Activated CD8-positive, alpha-beta T cell treated with anti-CD3 and anti-CD28 coated beads for 36 hours (primary cell): ENCODE measurements at regions of chr9 and their contacts with region 1.

Region 1: GRCh38 chr9:136312436-136312835 is 8.5 kb upstream of the CCDC187 start:
- DNase-seq: peak; percentile 61
- ATAC-seq: peak; percentile 71
- H3K4me3 Mint-ChIP-seq: no peak overlapping the region
- H3K27ac Mint-ChIP-seq: no peak overlapping the region
- H3K4me1 Mint-ChIP-seq: peaks cover 5% of the 10 kb centered on the region
- H3K27me3 Mint-ChIP-seq: peaks cover 2% of the 10 kb centered on the region
- CTCF ChIP-seq: peak; percentile 62

Region 2: GRCh38 chr9:136363606-136364370 is 51.4 kb after region 1 on chr9 and contains the start of gene DNLZ:
- CTCF ChIA-PET with region 1: interaction called, 14 read pairs
- POLR2A ChIA-PET with region 1: no interaction called
- intact Hi-C with region 1: no loop called
- DNase-seq: peak; percentile 87
- ATAC-seq: peak; percentile 77
- H3K4me3 Mint-ChIP-seq: peak within 1 kb of the TSS; percentile 81
- H3K27ac Mint-ChIP-seq: peak within 1 kb of the TSS; percentile 89
- H3K4me1 Mint-ChIP-seq: peaks cover 11% of the 10 kb centered on the region
- H3K27me3 Mint-ChIP-seq: no peaks in the 10 kb centered on the region
- CTCF ChIP-seq: peak; percentile 98
- total RNA-seq, gene DNLZ: 16.1 to 17.4 TPM

Region 3: GRCh38 chr9:136377341-136378169 is 65.1 kb after region 1 on chr9:
- CTCF ChIA-PET with region 1: no interaction called
- POLR2A ChIA-PET with region 1: no interaction called
- intact Hi-C with region 1: no loop called
- DNase-seq: no peak
- ATAC-seq: no peak
- H3K4me3 Mint-ChIP-seq: no peak overlapping the region
- H3K27ac Mint-ChIP-seq: no peak overlapping the region
- H3K4me1 Mint-ChIP-seq: peaks cover 8% of the 10 kb centered on the region
- H3K27me3 Mint-ChIP-seq: no peaks in the 10 kb centered on the region
- CTCF ChIP-seq: no peak

Region 4: GRCh38 chr9:136400038-136400834 is 87.8 kb after region 1 on chr9 and contains the start of gene SNAPC4:
- CTCF ChIA-PET with region 1: interaction called, 5 read pairs
- POLR2A ChIA-PET with region 1: interaction called, 4 read pairs
- intact Hi-C with region 1: loop called (anchors 10 kb)
- DNase-seq: peak; percentile 87
- ATAC-seq: peak; percentile 64
- H3K4me3 Mint-ChIP-seq: peak within 1 kb of the TSS; percentile 87
- H3K27ac Mint-ChIP-seq: peak within 1 kb of the TSS; percentile 79
- H3K4me1 Mint-ChIP-seq: peaks cover 47% of the 10 kb centered on the region
- H3K27me3 Mint-ChIP-seq: no peaks in the 10 kb centered on the region
- CTCF ChIP-seq: peak; percentile 94
- total RNA-seq, gene SNAPC4: 15.5 to 17.1 TPM

Region 5: DNA sequence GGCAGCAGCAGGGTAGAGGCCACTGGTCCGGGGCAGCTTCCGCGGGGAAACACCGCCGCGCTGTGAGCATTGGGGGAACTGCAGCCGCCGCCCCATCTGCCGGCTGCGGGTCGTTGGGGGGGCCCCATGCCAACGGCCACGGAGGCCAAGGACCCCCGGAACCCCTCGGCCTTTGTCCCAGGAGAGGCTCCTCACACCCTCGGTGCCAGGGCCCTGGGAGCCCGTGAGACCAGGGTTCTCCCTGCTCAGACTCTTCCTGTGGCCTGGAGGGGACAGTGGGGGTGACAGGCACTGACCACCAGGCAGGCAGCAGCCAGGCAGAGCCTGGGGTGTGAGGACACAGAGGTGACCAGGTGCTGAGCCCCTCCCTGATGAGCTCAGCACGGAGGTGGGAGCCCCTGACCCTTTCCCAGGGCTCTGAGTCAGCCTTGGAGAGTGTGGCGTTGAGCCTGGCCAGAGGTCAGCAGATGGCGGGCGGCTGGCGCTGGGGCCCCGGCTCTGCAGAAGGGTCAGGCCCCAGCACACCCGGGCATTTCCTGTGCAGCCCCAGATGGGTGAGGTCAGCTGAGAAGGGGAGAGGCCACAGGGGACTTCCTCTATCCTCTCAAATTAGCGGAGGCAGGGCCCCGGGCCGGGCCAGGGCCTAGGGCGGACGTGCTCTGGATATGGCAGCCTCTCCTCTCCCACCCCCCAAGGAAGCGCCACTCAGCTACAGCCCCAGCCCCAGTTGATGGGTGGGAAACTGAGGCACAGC is 332.3 kb after region 1 on chr9:
- CTCF ChIA-PET with region 1: no interaction called
- POLR2A ChIA-PET with region 1: no interaction called
- intact Hi-C with region 1: no loop called
- DNase-seq: peak; percentile 84
- ATAC-seq: peak; percentile 99
- H3K4me3 Mint-ChIP-seq: no peak overlapping the region
- H3K27ac Mint-ChIP-seq: no peak overlapping the region
- H3K4me1 Mint-ChIP-seq: no peaks in the 10 kb centered on the region
- H3K27me3 Mint-ChIP-seq: peaks cover 19% of the 10 kb centered on the region
- CTCF ChIP-seq: peak; percentile 97